ENCODE measurements at regions of chr11 and their contacts with region 1.

Region 1: DNA sequence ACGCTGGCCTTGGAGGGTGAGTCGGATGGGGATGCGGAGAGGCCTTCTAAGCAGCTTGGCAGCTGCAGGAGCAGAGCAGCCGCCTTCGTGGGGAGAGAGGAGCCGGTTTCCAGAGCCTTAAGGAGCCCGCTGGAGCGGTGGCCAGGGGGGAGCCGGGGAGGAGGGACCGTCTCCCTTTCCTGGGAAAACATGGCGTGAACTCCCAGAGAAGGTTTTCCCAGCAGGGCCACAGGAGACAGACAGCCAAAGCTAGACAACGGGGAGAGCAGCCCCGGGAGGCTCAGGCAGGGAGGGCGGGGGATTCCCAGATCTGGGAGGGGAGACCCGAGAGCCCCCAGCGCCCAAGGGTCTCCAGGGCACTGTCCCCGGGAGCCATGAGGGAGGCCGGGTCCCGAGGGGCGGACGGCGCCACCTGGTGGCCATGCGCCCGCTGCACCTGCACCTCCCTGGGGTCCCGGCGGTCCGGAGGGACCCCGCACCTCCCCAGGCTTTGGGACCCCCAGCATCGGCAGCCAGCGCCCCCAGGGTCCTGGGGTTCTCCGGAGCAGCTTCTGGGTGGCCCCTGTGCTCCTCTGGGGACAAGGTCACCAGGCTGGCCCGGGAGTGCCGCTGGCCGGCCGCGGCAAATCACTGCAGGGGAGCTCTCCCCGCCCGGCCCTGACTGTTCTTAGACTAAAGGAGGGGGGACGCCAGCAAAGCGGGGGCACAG is 2.4 kb upstream of the SYT8 start:
- DNase-seq: peak in 4 of 5 donors; percentile 52 to 80 (median 60)
- ATAC-seq: peak; percentile 74 to 83 (median 80)
- H3K4me3 ChIP-seq: peak overlapping the region in 9 of 12 donors; percentile 5 to 40 (median 28)
- H3K27ac ChIP-seq: no peak overlapping the region
- H3K4me1 ChIP-seq: peaks cover 0 to 15% (median 7%) of the 10 kb centered on the region in 12 donors
- H3K27me3 ChIP-seq: peaks cover 0 to 18% (median 0%) of the 10 kb centered on the region in 9 donors
- CTCF ChIP-seq: peak in 11 of 12 donors; percentile 95 to 100 (median 98)
- POLR2A ChIP-seq: peak in 1 of 2 donors; percentile 18

Region 2: DNA sequence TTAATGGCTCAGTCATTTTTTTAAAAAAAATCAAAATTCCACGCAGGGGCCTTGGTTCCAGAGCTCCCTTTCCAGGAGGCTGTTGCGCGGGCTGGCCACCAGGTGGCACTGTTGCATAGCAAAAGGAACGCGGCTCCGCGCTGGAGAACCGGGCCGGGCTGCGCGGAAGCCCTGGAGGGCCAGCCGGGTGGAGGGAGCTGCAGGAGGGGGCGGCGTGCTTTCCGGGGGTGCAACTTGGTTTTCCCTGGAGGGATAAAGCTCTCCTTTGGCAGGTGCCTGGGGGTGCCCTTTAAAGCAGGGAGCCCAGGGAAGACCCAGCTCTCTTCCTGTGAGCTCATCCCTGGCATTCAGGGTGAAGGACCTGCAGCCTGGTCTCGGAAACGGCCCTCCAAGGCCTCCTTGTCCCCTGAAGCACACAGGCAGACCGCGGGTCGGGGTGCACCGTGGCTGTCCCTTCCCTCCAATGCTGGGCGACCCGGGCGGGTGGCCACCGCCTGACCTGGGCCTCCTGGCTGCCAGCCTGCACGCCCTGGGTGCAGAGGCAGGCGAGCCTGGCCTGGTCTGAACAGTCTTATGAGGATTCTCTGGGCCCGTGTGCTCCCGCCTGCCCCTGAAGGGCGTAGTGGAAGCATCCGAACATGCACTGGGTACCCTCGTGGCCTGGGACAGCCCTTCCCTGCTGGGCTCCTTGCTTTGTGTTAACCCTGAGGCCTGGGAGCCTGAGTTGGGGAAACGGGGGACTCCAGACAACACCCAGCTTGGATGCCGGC is 179.4 kb before region 1 on chr11:
- intact Hi-C with region 1: loop called (anchors 1 to 5 kb)
- DNase-seq: peak; percentile 67 to 89 (median 72)
- ATAC-seq: peak; percentile 59 to 89 (median 80)
- H3K4me3 ChIP-seq: no peak overlapping the region
- H3K27ac ChIP-seq: no peak overlapping the region
- H3K4me1 ChIP-seq: peaks cover 0 to 8% (median 0%) of the 10 kb centered on the region in 12 donors
- H3K27me3 ChIP-seq: peaks cover 0 to 27% (median 0%) of the 10 kb centered on the region in 9 donors
- CTCF ChIP-seq: peak; percentile 95 to 99 (median 97)
- POLR2A ChIP-seq: no peak

Region 3: GRCh38 chr11:1873048-1873812 is 40.9 kb after region 1 on chr11:
- intact Hi-C with region 1: no loop called
- DNase-seq: peak in 3 of 5 donors; percentile 41 to 68 (median 68)
- ATAC-seq: peak in 3 of 4 donors; percentile 11 to 36 (median 26)
- H3K4me3 ChIP-seq: peak overlapping the region in 9 of 12 donors; percentile 14 to 70 (median 41)
- H3K27ac ChIP-seq: peak overlapping the region in 10 of 12 donors; percentile 32 to 93 (median 60)
- H3K4me1 ChIP-seq: peaks cover 11 to 57% (median 32%) of the 10 kb centered on the region in 12 donors
- H3K27me3 ChIP-seq: peaks cover 0 to 10% (median 0%) of the 10 kb centered on the region in 9 donors
- CTCF ChIP-seq: no peak
- POLR2A ChIP-seq: no peak